Dendritic cell treated with granulocyte-macrophage colony-stimulating factor and Interleukin-4, amounts not matched to agents 40 ng/mL and 50 ng/mL, for 4 days (primary cell): ENCODE measurements at regions of chr15 and their contacts with region 1.

Region 1: DNA sequence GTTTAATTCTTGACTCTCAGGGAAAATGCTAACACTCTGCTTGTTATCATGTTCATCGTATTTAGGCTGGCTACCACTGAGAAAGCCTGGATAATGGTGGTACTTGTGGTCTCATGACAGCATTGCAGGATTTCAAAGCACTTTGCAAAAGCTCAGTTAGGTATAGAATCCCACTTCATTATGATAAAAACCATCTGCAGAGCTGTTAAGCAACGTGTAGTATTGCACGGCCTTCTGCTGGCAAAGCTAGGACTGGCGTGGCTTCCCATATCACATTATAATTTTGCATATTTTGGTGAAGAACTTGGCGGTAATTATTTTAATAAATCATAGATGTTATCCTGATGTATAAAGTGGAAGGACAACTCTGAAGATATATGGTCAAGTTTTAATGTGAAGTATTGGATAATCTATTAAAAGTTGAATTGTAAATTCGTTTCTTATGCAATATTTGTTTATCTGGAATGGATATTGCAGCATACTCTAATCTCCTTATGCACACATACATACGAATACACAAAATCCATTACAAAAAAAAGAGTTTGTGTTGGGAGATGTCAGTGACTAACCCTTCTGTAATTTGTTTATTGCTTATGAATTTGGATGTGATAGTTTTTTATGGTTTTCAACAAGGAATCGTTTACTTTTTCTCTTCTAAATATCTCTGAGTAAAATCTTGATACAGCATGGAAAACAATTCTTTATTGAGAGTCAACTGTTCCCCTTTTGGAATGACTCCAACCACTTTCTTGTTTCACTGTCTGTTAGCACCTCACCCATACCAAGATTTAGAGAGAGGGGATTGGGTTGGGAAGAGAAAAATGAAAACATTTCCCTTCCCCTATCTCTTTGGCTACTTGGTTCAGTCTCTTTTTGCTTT is 9.2 kb downstream of the RAB8B start:
- H3K4me3 Mint-ChIP-seq: no peak overlapping the region
- H3K27ac Mint-ChIP-seq: no peak overlapping the region
- H3K4me1 Mint-ChIP-seq: peaks cover 59% of the 10 kb centered on the region
- H3K27me3 Mint-ChIP-seq: no peaks in the 10 kb centered on the region

Region 2: GRCh38 chr15:63226966-63227401 is 28.4 kb after region 1 on chr15:
- intact Hi-C with region 1: no loop called
- H3K4me3 Mint-ChIP-seq: no peak overlapping the region
- H3K27ac Mint-ChIP-seq: peak overlapping the region; percentile 82
- H3K4me1 Mint-ChIP-seq: peaks cover 33% of the 10 kb centered on the region
- H3K27me3 Mint-ChIP-seq: no peaks in the 10 kb centered on the region

Region 3: DNA sequence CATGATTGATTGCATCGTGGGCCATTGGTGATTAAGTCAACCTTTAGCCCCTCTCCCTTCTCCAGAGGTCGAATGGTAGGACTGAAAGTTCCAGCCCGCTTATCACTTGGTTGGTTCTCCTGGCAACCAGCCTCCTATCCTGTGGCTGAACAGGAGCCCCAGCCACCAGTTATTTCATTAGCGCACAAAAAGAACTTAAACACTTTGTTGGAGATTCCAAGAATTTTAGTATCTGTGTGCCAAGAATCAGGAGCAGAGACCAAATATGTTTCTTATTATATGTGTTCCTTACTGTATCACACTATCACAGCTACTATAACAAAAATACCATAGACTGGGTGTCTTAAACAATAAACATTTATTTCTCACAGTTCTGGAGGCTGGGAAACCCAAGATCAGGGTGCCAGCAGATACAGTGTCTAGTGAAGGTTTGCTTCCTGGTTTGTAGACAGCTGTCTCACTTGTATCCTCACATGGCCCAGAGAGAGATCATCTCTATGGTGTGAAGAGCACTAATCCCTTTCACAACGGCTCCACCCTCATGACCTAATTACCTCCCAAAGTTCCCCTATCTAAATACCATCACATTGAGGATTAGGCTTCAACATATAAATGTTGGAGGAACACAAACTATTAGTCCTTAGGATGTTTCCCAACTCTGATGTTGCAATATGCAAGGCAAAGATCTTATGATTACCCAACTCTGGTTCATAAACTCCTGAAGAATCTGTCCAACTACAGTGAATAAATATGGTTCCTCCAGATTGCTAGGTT is 48.3 kb after region 1 on chr15:
- intact Hi-C with region 1: loop called (anchors 5 kb)
- H3K4me3 Mint-ChIP-seq: no peak overlapping the region
- H3K27ac Mint-ChIP-seq: peak overlapping the region; percentile 65
- H3K4me1 Mint-ChIP-seq: peaks cover 39% of the 10 kb centered on the region
- H3K27me3 Mint-ChIP-seq: no peaks in the 10 kb centered on the region